ENCODE measurements at regions of chr7 and their contacts with region 1.

Region 1: DNA sequence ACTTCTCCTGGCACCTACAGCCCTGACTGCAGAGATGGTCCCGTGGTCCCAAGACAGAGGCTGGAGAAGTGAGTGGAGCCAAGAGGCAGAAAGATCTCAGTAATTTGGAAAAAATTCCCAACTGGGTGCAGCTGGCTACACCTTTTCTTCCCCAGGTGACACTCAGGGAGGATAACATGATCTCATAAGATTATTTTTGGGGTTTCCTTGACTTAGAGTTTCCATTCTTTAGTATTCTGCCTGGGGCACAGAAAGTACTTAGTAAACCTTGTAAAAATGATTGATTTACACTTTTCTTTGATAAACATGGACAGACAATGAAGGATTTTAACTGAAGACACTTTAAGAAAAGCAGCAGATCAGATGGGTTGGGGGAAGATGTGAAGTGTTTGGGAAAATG is 38.6 kb downstream of the HECW1 start:
- DNase-seq: no peak
- H3K4me3 ChIP-seq: no peak overlapping the region
- H3K27ac ChIP-seq: no peak overlapping the region
- H3K4me1 ChIP-seq: no peaks in the 10 kb centered on the region
- H3K27me3 ChIP-seq: no peaks in the 10 kb centered on the region
- CTCF ChIP-seq: no peak
- POLR2A ChIP-seq: no peak

Region 2: GRCh38 chr7:43164757-43165156 is 13.7 kb after region 1 on chr7:
- intact Hi-C with region 1: no loop called
- DNase-seq: no peak
- H3K4me3 ChIP-seq: no peak overlapping the region
- H3K27ac ChIP-seq: no peak overlapping the region
- H3K4me1 ChIP-seq: no peaks in the 10 kb centered on the region
- H3K27me3 ChIP-seq: no peaks in the 10 kb centered on the region
- CTCF ChIP-seq: no peak
- POLR2A ChIP-seq: no peak

Region 3: GRCh38 chr7:43698460-43699255 is 547.6 kb after region 1 on chr7:
- intact Hi-C with region 1: loop called (anchors 5 kb)
- DNase-seq: no peak
- H3K4me3 ChIP-seq: no peak overlapping the region
- H3K27ac ChIP-seq: no peak overlapping the region
- H3K4me1 ChIP-seq: no peaks in the 10 kb centered on the region
- H3K27me3 ChIP-seq: no peaks in the 10 kb centered on the region
- CTCF ChIP-seq: no peak
- POLR2A ChIP-seq: no peak

Measured in breast epithelium (tissue), 4 donors.